Heart left ventricle (tissue), 16 donors: ENCODE measurements at regions of chr17 and their contacts with region 1.

Region 1: GRCh38 chr17:78645421-78646295 is 68.5 kb upstream of the DNAH17 start:
- DNase-seq: peak; percentile 87 to 90 (median 89)
- ATAC-seq: peak; percentile 87 to 97 (median 93)
- H3K4me3 ChIP-seq: peak overlapping the region in 1 of 12 donors; percentile 18
- H3K27ac ChIP-seq: peak overlapping the region in 11 of 12 donors; percentile 41 to 92 (median 82)
- H3K4me1 ChIP-seq: peaks cover 0 to 30% (median 7%) of the 10 kb centered on the region in 12 donors
- H3K27me3 ChIP-seq: peaks cover 0 to 7% (median 0%) of the 10 kb centered on the region in 9 donors
- CTCF ChIP-seq: no peak
- POLR2A ChIP-seq: no peak

Region 2: GRCh38 chr17:78588258-78589030 is 57.2 kb before region 1 on chr17:
- intact Hi-C with region 1: loop called in 3 of 10 experiments (anchors 5 to 10 kb)
- DNase-seq: peak in 2 of 5 donors; percentile 31 to 41
- ATAC-seq: no peak
- H3K4me3 ChIP-seq: no peak overlapping the region
- H3K27ac ChIP-seq: no peak overlapping the region
- H3K4me1 ChIP-seq: peaks cover 0 to 30% (median 11%) of the 10 kb centered on the region in 12 donors
- H3K27me3 ChIP-seq: peaks cover 0 to 11% (median 0%) of the 10 kb centered on the region in 9 donors
- CTCF ChIP-seq: no peak
- POLR2A ChIP-seq: no peak

Region 3: DNA sequence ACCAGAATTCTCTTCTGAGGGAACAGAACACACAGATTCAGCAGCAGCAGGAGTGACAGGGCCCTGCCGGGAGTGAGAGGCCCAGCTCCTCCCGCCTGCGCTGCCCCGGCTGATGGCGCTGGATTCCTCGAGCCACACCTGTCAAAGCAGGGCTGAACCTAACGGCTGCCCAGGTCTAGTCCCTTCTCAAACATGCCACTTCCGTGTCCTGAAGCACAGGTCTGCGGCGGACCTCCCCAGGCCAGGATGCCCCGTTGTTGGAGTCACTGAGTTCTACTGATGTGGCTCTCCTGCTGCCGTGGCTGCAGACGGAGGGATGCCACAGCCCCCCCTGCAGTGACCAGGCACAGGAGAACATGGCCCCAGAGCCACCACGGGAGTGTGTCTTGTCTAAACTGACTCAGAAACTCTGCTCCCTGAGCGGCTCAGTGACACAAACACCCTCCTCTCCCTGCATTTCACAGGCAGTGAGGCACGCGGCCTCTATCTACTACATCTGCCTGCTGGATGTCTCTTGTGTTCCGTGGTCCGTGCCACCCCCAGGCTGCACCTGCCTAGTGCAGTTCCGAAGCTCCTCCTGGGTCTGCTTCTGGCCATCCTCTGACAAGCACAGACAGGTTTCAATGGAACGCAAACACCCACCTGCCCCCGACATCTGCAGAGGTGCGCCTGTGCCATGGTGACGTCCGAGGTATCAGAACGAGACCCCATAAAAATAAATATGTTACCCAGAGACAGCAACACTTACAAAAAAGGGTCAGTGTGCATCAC is 23.8 kb before region 1 on chr17:
- intact Hi-C with region 1: loop called in 1 of 10 experiments (anchors 2 kb)
- DNase-seq: no peak
- ATAC-seq: no peak
- H3K4me3 ChIP-seq: no peak overlapping the region
- H3K27ac ChIP-seq: no peak overlapping the region
- H3K4me1 ChIP-seq: peaks cover 0 to 6% (median 0%) of the 10 kb centered on the region in 12 donors
- H3K27me3 ChIP-seq: no peaks in the 10 kb centered on the region
- CTCF ChIP-seq: no peak
- POLR2A ChIP-seq: no peak